HEK293T (cell line): ENCODE measurements at regions of chr2 and their contacts with region 1.

Region 1: GRCh38 chr2:238863231-238863630 is 15.3 kb downstream of the TWIST2 start:
- DNase-seq: no peak

Region 2: DNA sequence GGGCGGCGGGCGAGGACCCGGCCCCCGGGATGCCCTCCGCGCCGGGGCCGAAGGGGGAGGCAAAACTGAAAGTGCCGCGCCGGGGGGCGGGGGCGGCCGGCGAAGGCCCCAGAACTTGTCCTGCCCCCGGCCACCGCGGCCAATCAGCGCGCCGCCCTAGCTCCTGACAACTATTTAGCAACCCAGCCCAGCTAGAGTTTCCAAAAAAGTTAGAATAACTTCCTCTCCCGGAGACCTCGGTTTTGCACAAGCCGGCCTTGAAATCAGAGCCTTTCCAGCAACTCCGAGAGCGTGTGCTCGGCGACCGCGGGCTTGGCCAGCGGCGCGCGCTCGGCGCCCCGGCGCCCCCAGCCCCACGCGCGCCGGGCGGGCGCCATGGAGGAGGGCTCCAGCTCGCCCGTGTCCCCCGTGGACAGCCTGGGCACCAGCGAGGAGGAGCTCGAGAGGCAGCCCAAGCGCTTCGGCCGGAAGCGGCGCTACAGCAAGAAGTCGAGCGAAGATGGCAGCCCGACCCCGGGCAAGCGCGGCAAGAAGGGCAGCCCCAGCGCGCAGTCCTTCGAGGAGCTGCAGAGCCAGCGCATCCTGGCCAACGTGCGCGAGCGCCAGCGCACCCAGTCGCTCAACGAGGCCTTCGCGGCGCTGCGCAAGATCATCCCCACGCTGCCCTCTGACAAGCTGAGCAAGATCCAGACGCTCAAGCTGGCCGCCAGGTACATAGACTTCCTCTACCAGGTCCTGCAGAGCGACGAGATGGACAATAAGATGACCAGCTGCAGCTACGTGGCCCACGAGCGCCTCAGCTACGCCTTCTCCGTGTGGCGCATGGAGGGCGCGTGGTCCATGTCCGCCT is 15.2 kb before region 1 on chr2 and contains the start of gene TWIST2:
- CTCF ChIA-PET with region 1: no interaction called
- POLR2A ChIA-PET with region 1: interaction called, 10 read pairs
- DNase-seq: no peak

Region 3: DNA sequence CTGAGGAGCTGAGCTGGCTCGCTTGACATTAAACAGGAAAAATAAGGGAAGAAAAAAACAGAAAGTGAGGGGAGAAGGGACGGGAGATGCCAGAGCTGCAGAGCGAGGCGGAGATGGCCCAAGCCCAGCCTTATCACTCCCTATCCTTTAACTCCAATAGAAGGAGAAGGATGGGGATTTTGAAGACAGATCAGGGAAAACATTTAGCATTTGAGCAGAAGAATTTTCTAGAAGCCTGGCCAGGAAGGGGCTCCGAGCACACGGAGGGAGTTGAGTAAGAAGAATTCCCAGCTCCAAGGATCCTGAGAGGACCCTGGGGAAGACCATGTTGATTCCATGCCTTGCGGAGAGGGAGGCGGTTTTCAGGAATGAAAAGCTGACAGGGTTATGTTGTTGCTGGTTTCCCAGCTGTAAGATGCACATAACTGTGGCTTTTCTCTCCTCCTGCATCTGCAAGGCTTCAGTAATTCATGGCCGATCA is 20.2 kb after region 1 on chr2:
- CTCF ChIA-PET with region 1: no interaction called
- POLR2A ChIA-PET with region 1: no interaction called
- DNase-seq: no peak